ENCODE measurements at regions of chr6 and their contacts with region 1.

Region 1: GRCh38 chr6:27809939-27810767 is 102.0 kb downstream of the OR2B2 start:
- DNase-seq: peak; percentile 76 to 95
- ATAC-seq: peak; percentile 55 to 71 (median 63)
- H3K4me3 ChIP-seq: peak overlapping the region; percentile 63
- H3K4me3 Mint-ChIP-seq: peak overlapping the region; percentile 95
- H3K27ac ChIP-seq: peak overlapping the region; percentile 88
- H3K27ac Mint-ChIP-seq: peak overlapping the region; percentile 96 to 99
- H3K4me1 ChIP-seq: peaks cover 37% of the 10 kb centered on the region
- H3K4me1 Mint-ChIP-seq: peaks cover 49 to 56% of the 10 kb centered on the region in 2 donors
- H3K27me3 ChIP-seq: no peaks in the 10 kb centered on the region
- H3K27me3 Mint-ChIP-seq: no peaks in the 10 kb centered on the region
- CTCF ChIP-seq: no peak

Region 2: GRCh38 chr6:27146706-27147505 is 663.2 kb before region 1 on chr6:
- intact Hi-C with region 1: loop called (anchors 5 kb)
- DNase-seq: peak; percentile 74 to 97
- ATAC-seq: peak; percentile 76 to 88 (median 82)
- H3K4me3 ChIP-seq: peak overlapping the region; percentile 74
- H3K4me3 Mint-ChIP-seq: no peak overlapping the region
- H3K27ac ChIP-seq: peak overlapping the region; percentile 88
- H3K27ac Mint-ChIP-seq: no peak overlapping the region
- H3K4me1 ChIP-seq: peaks cover 23% of the 10 kb centered on the region
- H3K4me1 Mint-ChIP-seq: peaks cover 0 to 3% of the 10 kb centered on the region in 2 donors
- H3K27me3 ChIP-seq: no peaks in the 10 kb centered on the region
- H3K27me3 Mint-ChIP-seq: no peaks in the 10 kb centered on the region
- CTCF ChIP-seq: no peak

Region 3: GRCh38 chr6:27518881-27519795 is 291.0 kb before region 1 on chr6:
- intact Hi-C with region 1: loop called (anchors 5 kb)
- DNase-seq: peak; percentile 49 to 88
- ATAC-seq: peak; percentile 61 to 81 (median 81)
- H3K4me3 ChIP-seq: peak overlapping the region; percentile 82
- H3K4me3 Mint-ChIP-seq: peak overlapping the region; percentile 91
- H3K27ac ChIP-seq: peak overlapping the region; percentile 71
- H3K27ac Mint-ChIP-seq: peak overlapping the region; percentile 87 to 88
- H3K4me1 ChIP-seq: peaks cover 11% of the 10 kb centered on the region
- H3K4me1 Mint-ChIP-seq: peaks cover 16 to 17% of the 10 kb centered on the region in 2 donors
- H3K27me3 ChIP-seq: peaks cover 9% of the 10 kb centered on the region
- H3K27me3 Mint-ChIP-seq: peaks cover 29 to 46% of the 10 kb centered on the region in 2 donors
- CTCF ChIP-seq: peak; percentile 79

Region 4: GRCh38 chr6:27864906-27865849 is 55.0 kb after region 1 on chr6:
- intact Hi-C with region 1: loop called (anchors 2 kb)
- DNase-seq: peak; percentile 63 to 96
- ATAC-seq: peak; percentile 76 to 89 (median 81)
- H3K4me3 ChIP-seq: peak overlapping the region; percentile 69
- H3K4me3 Mint-ChIP-seq: peak overlapping the region; percentile 90
- H3K27ac ChIP-seq: peak overlapping the region; percentile 82
- H3K27ac Mint-ChIP-seq: peak overlapping the region; percentile 92 to 94
- H3K4me1 ChIP-seq: peaks cover 35% of the 10 kb centered on the region
- H3K4me1 Mint-ChIP-seq: peaks cover 44% of the 10 kb centered on the region in 2 donors
- H3K27me3 ChIP-seq: no peaks in the 10 kb centered on the region
- H3K27me3 Mint-ChIP-seq: no peaks in the 10 kb centered on the region
- CTCF ChIP-seq: no peak

Measured in natural killer cell (primary cell).